WTC11 (cell line): ENCODE measurements at regions of chr12 and their contacts with region 1.

Region 1: DNA sequence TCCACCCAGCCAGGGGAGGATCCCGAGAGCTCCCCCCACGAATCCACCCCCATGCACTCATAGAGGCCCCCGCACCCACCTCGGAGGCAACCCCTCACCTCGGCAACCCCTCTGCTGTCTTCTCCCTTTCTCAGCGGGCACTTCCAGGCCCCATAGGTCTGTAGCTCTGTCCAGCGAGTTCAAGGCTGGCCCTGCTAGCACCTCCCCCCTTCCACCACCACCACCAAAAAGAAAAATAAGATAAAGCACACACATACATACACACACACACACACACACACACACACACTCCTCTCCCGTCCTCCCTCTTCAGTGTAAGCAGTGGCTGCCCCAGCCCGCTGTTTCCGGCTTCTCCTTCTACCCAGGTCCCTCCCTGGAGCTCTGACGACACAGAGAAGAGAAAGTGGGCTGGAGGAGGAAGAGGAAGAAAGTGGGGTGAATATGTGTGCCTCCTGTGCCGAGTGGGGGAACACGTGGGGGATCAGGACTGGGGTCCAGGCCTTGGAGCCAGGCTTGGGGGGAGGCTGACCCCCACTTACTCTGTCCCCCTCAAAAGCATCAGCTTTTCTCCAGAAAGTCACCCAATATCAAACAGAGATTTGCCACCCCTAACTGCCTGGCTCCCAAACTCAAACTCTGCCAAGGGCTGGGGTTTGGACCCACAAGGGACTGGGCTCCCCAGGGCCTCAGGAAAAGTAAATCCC is at the start of gene STAT6:
- DNase-seq: peak; percentile 48
- ATAC-seq: peak; percentile 8
- H3K4me3 Mint-ChIP-seq: peak within 1 kb of the TSS; percentile 72
- H3K27ac Mint-ChIP-seq: peak within 1 kb of the TSS; percentile 98
- H3K4me1 Mint-ChIP-seq: peaks cover 36% of the 10 kb centered on the region
- H3K27me3 Mint-ChIP-seq: no peaks in the 10 kb centered on the region
- CTCF ChIP-seq: no peak
- total RNA-seq, gene STAT6: 47.0 to 50.0 TPM (median 48.9 TPM) in 3 replicates

Region 2: GRCh38 chr12:56987551-56988053 is 123.6 kb before region 1 on chr12:
- CTCF ChIA-PET with region 1: interaction called, 25 read pairs
- POLR2A ChIA-PET with region 1: interaction called, 3 read pairs
- DNase-seq: peak; percentile 90
- ATAC-seq: peak; percentile 96
- H3K4me3 Mint-ChIP-seq: no peak overlapping the region
- H3K27ac Mint-ChIP-seq: no peak overlapping the region
- H3K4me1 Mint-ChIP-seq: peaks cover 17% of the 10 kb centered on the region
- H3K27me3 Mint-ChIP-seq: no peaks in the 10 kb centered on the region; the same call in 1 of the 2 replicates
- CTCF ChIP-seq: peak; percentile 96

Region 3: DNA sequence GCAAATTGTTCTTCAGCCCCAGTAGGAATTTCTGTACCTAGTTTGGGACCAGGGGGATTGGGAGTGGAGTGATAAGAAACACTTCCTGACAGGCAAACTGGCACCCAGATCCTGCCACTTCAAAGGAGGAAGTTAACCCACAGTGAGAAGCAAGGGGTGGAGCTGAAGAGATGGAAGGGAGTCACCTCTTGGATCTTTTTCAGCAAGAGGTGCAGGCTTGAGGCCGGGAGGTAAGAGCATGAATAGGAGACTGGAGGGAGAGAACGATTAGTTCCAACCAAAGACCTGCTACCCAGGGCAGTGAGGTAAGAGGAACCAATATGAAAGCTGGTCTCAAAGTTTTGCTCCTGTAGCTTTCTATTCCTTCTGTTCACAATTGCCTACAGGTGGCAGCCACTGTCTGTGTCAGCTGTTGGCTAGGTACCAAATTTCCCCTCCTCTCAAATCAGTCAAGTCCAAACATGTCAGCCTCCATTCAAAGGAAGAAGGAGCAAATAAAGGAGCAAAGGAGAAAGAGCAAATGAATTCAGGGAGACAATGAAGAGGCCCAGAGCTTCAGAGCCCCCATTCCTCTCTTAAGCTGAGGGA is 80.0 kb before region 1 on chr12:
- CTCF ChIA-PET with region 1: interaction called, 25 read pairs
- POLR2A ChIA-PET with region 1: interaction called, 3 read pairs
- DNase-seq: no peak
- ATAC-seq: peak; percentile 50
- H3K4me3 Mint-ChIP-seq: no peak overlapping the region
- H3K27ac Mint-ChIP-seq: no peak overlapping the region
- H3K4me1 Mint-ChIP-seq: peaks cover 19% of the 10 kb centered on the region
- H3K27me3 Mint-ChIP-seq: peaks cover under 1% of the 10 kb centered on the region; the same call in 1 of the 2 replicates
- CTCF ChIP-seq: no peak

Region 4: GRCh38 chr12:57078519-57079404 is 32.4 kb before region 1 on chr12 and contains the start of gene NEMP1:
- CTCF ChIA-PET with region 1: interaction called, 270 read pairs
- POLR2A ChIA-PET with region 1: interaction called, 13 read pairs
- DNase-seq: peak; percentile 96
- ATAC-seq: peak; percentile 99
- H3K4me3 Mint-ChIP-seq: peak within 1 kb of the TSS; percentile 95
- H3K27ac Mint-ChIP-seq: peak within 1 kb of the TSS; percentile 92
- H3K4me1 Mint-ChIP-seq: peaks cover 6% of the 10 kb centered on the region; the same call in 1 of the 2 replicates
- H3K27me3 Mint-ChIP-seq: no peaks in the 10 kb centered on the region
- CTCF ChIP-seq: no peak
- total RNA-seq, gene NEMP1: 38.3 to 41.9 TPM (median 39.6 TPM) in 3 replicates

Region 5: GRCh38 chr12:57129889-57130288 is 18.7 kb after region 1 on chr12:
- CTCF ChIA-PET with region 1: interaction called, 85 read pairs
- POLR2A ChIA-PET with region 1: interaction called, 21 read pairs
- DNase-seq: no peak
- ATAC-seq: no peak
- H3K4me3 Mint-ChIP-seq: peak overlapping the region; percentile 85
- H3K27ac Mint-ChIP-seq: peak overlapping the region; percentile 60
- H3K4me1 Mint-ChIP-seq: peaks cover 64% of the 10 kb centered on the region
- H3K27me3 Mint-ChIP-seq: no peaks in the 10 kb centered on the region
- CTCF ChIP-seq: no peak

Region 6: GRCh38 chr12:57190037-57190436 is 78.9 kb after region 1 on chr12:
- CTCF ChIA-PET with region 1: no interaction called
- POLR2A ChIA-PET with region 1: no interaction called
- DNase-seq: no peak
- ATAC-seq: no peak
- H3K4me3 Mint-ChIP-seq: no peak overlapping the region
- H3K27ac Mint-ChIP-seq: no peak overlapping the region
- H3K4me1 Mint-ChIP-seq: no peaks in the 10 kb centered on the region
- H3K27me3 Mint-ChIP-seq: no peaks in the 10 kb centered on the region
- CTCF ChIP-seq: no peak

Region 7: DNA sequence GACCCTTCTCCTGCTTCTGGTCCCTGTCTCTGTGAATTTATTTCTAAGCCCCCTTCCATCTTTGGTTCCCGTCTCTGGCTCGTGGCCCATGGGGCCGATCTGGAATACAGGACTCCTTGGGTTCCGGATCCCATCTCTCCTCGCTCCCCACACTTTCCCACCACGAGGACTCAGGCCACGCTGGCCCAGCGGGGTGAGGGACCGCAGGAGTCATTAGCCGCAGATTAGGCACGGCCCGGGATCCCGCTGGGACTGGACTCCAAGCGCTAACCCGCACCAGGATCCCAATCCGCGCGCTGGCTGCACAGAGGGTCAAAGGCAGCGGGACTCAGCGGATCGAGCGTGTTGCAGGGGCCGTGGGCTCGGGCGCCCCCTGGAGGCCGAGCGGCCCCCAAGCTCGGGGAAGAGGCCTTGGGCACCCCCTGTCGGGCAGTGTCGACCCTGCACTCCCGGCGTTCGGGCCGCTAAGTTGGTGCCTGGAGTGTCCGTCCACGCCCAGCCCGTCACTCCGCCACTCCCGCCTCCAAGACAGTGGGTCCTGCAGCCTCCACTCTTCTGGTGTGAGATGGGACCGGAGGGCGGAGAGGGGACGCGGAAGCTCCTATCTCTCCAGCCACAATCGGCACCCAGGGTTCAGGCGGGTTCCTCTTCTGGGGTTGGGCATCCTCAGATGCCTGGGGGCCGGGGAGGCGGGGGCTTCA is 127.8 kb after region 1 on chr12:
- CTCF ChIA-PET with region 1: interaction called, 11 read pairs
- POLR2A ChIA-PET with region 1: no interaction called
- DNase-seq: peak; percentile 90
- ATAC-seq: peak; percentile 10
- H3K4me3 Mint-ChIP-seq: peak overlapping the region; percentile 84
- H3K27ac Mint-ChIP-seq: no peak overlapping the region; the same call in 1 of the 2 replicates
- H3K4me1 Mint-ChIP-seq: peaks cover 66% of the 10 kb centered on the region
- H3K27me3 Mint-ChIP-seq: peaks cover 89% of the 10 kb centered on the region
- CTCF ChIP-seq: peak; percentile 100